Right cardiac atrium (tissue), 5 donors: ENCODE measurements at regions of chr3 and their contacts with region 1.

Region 1: DNA sequence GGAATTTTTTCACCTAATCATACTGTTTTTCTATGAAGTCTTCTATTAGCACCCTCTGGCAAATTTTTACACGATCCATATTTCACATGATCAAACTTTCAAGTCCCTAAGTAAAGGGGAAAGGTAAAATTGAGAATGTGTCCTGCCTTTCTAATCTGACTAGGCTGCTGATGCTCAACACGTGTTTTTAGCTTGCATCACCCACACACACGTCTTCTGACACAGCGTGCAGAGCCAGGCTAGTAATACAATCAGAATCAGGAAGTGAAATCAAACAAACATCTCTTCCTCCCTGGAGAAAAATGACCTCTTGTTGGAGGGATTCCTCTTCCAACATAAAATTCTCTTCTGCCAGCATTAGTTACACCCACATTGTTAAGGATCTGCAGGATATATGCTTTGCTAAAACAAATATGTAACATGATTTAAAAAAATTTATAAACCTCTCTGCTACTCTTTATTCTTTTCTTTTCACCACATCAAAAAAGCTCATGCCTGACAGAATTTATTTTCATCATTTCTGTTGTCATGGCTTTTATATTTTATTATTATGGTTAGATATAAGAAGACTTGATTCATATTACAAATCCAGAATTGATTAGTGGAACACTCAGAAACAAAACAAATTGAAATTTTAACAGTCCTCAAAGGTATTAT is 122.4 kb downstream of the RAP2B start:
- DNase-seq: peak; percentile 56 to 61 (median 57)
- ATAC-seq: peak; percentile 84 to 94
- H3K4me3 ChIP-seq: no peak overlapping the region
- H3K27ac ChIP-seq: no peak overlapping the region
- H3K4me1 ChIP-seq: peaks cover 2% of the 10 kb centered on the region
- H3K27me3 ChIP-seq: no peaks in the 10 kb centered on the region

Region 2: GRCh38 chr3:152909180-152909883 is 375.1 kb before region 1 on chr3:
- intact Hi-C with region 1: no loop called
- DNase-seq: peak in 2 of 3 donors; percentile 10 to 12
- ATAC-seq: peak; percentile 85 to 86
- H3K4me3 ChIP-seq: no peak overlapping the region
- H3K27ac ChIP-seq: no peak overlapping the region
- H3K4me1 ChIP-seq: no peaks in the 10 kb centered on the region
- H3K27me3 ChIP-seq: no peaks in the 10 kb centered on the region

Region 3: GRCh38 chr3:153043729-153044328 is 240.6 kb before region 1 on chr3:
- intact Hi-C with region 1: loop called in 1 of 4 experiments (anchors 10 kb)
- DNase-seq: no peak
- ATAC-seq: peak; percentile 52 to 64
- H3K4me3 ChIP-seq: no peak overlapping the region
- H3K27ac ChIP-seq: no peak overlapping the region
- H3K4me1 ChIP-seq: no peaks in the 10 kb centered on the region
- H3K27me3 ChIP-seq: no peaks in the 10 kb centered on the region

Region 4: GRCh38 chr3:153061938-153062528 is 222.4 kb before region 1 on chr3:
- intact Hi-C with region 1: no loop called
- DNase-seq: no peak
- ATAC-seq: no peak
- H3K4me3 ChIP-seq: no peak overlapping the region
- H3K27ac ChIP-seq: no peak overlapping the region
- H3K4me1 ChIP-seq: no peaks in the 10 kb centered on the region
- H3K27me3 ChIP-seq: no peaks in the 10 kb centered on the region